A549 (cell line): ENCODE measurements at regions of chr7 and their contacts with region 1.

Region 1: GRCh38 chr7:106736508-106737201 is 75.7 kb upstream of the CCDC71L start:
- DNase-seq: peak; percentile 32 to 61
- ATAC-seq: peak; percentile 91 to 96
- H3K4me3 ChIP-seq: no peak overlapping the region
- H3K27ac ChIP-seq: peak overlapping the region in 1 of 2 experiments; percentile 66; a peak in 3 of 6 replicates
- H3K4me1 ChIP-seq: no peaks in the 10 kb centered on the region
- CTCF ChIP-seq: peak; percentile 41
- EP300 ChIP-seq: no peak
- POLR2A ChIP-seq: no peak
- RAD21 ChIP-seq: peak; percentile 52 to 56

Region 2: GRCh38 chr7:106461993-106462859 is 274.4 kb before region 1 on chr7:
- CTCF ChIA-PET with region 1: no interaction called
- POLR2A ChIA-PET with region 1: no interaction called
- DNase-seq: peak in 1 of 2 experiments; percentile 50
- ATAC-seq: peak; percentile 62 to 81
- H3K4me3 ChIP-seq: no peak overlapping the region
- H3K27ac ChIP-seq: peak overlapping the region; percentile 62 to 67
- H3K4me1 ChIP-seq: peaks cover 12% of the 10 kb centered on the region; the same call in 1 of the 3 replicates
- CTCF ChIP-seq: peak; percentile 80
- EP300 ChIP-seq: no peak
- POLR2A ChIP-seq: no peak
- RAD21 ChIP-seq: peak; percentile 78 to 89

Region 3: DNA sequence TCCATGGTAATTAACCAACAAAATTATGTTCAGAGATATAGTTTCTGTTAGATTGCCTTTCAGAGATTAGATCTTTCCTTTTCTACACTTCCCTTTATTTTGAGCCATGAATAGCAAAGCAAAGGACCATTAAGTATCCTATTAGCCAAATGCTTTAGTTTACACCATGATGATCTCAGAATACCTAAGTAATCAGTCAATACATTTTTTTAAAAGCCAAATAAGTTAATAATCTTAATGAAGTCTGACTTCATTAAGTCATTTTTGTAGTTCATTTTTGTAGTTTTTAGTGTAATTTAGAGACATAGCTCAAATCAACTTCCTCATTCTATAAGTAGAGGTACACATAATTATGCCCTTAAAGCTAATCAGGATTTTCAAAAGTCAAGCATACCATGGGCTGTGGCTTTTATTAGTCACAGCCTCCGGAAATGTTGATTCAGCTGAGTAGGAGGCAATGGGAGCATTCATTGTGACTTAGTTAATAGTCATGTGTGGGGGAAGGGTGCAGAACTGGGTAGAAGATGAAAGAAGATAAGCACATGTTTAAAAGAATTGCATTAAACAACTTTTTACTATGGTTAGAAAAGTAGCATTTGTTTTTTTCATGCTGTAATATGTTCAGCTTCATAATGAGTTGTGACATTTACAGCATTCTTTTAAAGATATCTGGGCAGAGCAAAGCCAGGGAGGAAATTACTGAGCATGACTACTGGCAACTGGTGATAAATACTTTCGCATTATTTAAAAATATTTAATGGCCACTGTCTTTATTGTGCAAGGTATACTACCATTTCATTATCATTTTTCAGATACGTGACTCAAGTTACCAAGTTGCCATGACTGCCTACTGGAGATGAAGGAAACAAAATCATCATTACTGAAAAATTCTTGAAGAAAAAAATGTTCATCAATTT is 18.4 kb before region 1 on chr7:
- CTCF ChIA-PET with region 1: interaction called, 17 read pairs
- POLR2A ChIA-PET with region 1: no interaction called
- DNase-seq: peak; percentile 46 to 51
- ATAC-seq: peak; percentile 70 to 88
- H3K4me3 ChIP-seq: no peak overlapping the region
- H3K27ac ChIP-seq: peak overlapping the region; percentile 5 to 65; a peak in 4 of 6 replicates
- H3K4me1 ChIP-seq: peaks cover 13% of the 10 kb centered on the region
- CTCF ChIP-seq: no peak
- EP300 ChIP-seq: 0 out of 5 replicates have a peak, but pooled peaks of 1 of the 2 experiments have one; percentile 25
- POLR2A ChIP-seq: no peak
- RAD21 ChIP-seq: no peak

Region 4: GRCh38 chr7:106752367-106752766 is 15.7 kb after region 1 on chr7:
- CTCF ChIA-PET with region 1: interaction called, 10 read pairs
- POLR2A ChIA-PET with region 1: no interaction called
- DNase-seq: no peak
- ATAC-seq: no peak
- H3K4me3 ChIP-seq: no peak overlapping the region
- H3K27ac ChIP-seq: no peak overlapping the region
- H3K4me1 ChIP-seq: no peaks in the 10 kb centered on the region
- CTCF ChIP-seq: no peak
- EP300 ChIP-seq: no peak
- POLR2A ChIP-seq: no peak
- RAD21 ChIP-seq: no peak

Region 5: GRCh38 chr7:106793015-106793975 is 56.6 kb after region 1 on chr7:
- CTCF ChIA-PET with region 1: no interaction called
- POLR2A ChIA-PET with region 1: no interaction called
- DNase-seq: peak; percentile 25 to 38
- ATAC-seq: peak in 1 of 2 experiments; percentile 39; a peak in 1 of 6 replicates
- H3K4me3 ChIP-seq: no peak overlapping the region
- H3K27ac ChIP-seq: no peak overlapping the region
- H3K4me1 ChIP-seq: no peaks in the 10 kb centered on the region
- CTCF ChIP-seq: peak; percentile 89
- EP300 ChIP-seq: no peak
- POLR2A ChIP-seq: no peak
- RAD21 ChIP-seq: peak; percentile 85 to 89

Region 6: DNA sequence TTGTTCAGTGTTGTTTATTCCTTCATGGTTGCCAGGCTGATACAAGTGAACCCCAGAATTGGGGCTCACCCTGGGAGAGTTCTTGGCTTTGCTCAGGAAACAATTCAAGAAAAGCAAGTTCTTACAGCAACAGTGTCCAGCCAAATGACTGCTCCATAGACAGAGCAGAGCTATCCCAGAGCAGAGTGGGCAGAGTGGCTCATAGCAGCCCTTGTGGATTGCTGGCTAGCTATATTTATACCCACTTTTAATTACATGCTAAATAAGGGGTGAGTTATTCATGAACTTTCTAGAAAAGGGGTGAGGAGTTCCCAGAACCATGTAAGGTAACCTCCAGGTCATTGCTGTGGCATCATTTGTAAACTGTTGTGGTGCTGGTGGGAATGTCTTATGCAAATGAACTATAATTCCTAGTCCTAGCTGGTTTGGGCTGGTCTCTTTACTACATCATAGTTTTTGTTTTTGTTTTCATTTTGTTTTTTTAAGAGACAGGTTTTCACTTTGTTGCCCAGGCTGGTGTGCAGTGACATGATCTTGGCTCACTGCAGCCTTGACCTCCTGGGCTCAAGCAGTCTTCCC is 372.2 kb after region 1 on chr7:
- CTCF ChIA-PET with region 1: no interaction called
- POLR2A ChIA-PET with region 1: no interaction called
- DNase-seq: no peak
- ATAC-seq: no peak
- H3K4me3 ChIP-seq: no peak overlapping the region
- H3K27ac ChIP-seq: no peak overlapping the region
- H3K4me1 ChIP-seq: no peaks in the 10 kb centered on the region
- CTCF ChIP-seq: no peak
- EP300 ChIP-seq: no peak
- POLR2A ChIP-seq: no peak
- RAD21 ChIP-seq: no peak